Upper lobe of right lung (tissue), 1 donor: ENCODE measurements at regions of chr15 and their contacts with region 1.

Region 1: GRCh38 chr15:78709263-78709882 is 68.4 kb upstream of the CHRNB4 start:
- DNase-seq: peak; percentile 84
- ATAC-seq: peak; percentile 99
- H3K4me3 ChIP-seq: no peak overlapping the region
- H3K27ac ChIP-seq: no peak overlapping the region
- H3K4me1 ChIP-seq: peaks cover 4% of the 10 kb centered on the region
- H3K27me3 ChIP-seq: peaks cover 7% of the 10 kb centered on the region
- CTCF ChIP-seq: peak; percentile 84

Region 2: DNA sequence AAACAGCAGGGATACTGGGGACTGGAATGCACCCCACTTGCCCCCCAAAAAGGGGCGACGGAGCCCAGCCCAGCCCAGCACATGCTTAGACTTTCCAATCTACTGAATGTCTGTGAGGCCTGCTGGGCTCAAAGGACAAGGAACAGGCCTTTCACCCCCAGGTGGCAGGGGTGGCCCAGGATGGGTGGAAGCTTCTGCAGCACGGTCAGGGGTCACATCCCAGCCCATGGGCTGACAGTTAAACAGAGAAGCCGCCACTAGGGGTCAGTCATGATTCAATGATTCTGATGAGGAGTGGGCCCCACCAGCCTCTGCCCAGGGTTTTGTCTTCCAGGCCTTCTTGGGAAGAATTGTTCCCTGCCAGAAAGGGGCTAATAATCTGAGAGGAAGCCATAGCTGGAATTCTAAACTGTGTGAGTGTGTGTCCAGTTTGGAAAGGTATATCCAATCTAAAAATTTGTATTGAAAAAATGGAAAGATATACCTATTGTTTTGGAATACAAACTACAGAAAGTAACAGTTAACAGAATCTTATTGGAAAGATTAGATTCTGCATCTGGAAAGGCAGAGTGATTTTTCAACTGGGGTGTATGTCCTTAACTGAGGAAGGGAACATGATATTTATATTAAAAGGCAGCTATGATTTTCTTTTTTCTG is 70.6 kb before region 1 on chr15:
- intact Hi-C with region 1: loop called (anchors 10 kb)
- DNase-seq: peak; percentile 51
- ATAC-seq: peak; percentile 54
- H3K4me3 ChIP-seq: no peak overlapping the region
- H3K27ac ChIP-seq: no peak overlapping the region
- H3K4me1 ChIP-seq: peaks cover 10% of the 10 kb centered on the region
- H3K27me3 ChIP-seq: peaks cover 16% of the 10 kb centered on the region
- CTCF ChIP-seq: peak; percentile 65